ENCODE measurements at regions of chr7 and their contacts with region 1.

Region 1: GRCh38 chr7:99525713-99526440 is 21.4 kb downstream of the ZKSCAN5 start:
- DNase-seq: peak; percentile 37
- ATAC-seq: peak; percentile 58
- H3K4me3 Mint-ChIP-seq: no peak overlapping the region
- H3K27ac Mint-ChIP-seq: peak overlapping the region; percentile 75; the same call in 1 of the 2 replicates
- H3K4me1 Mint-ChIP-seq: no peaks in the 10 kb centered on the region
- H3K27me3 Mint-ChIP-seq: peaks cover 6% of the 10 kb centered on the region
- CTCF ChIP-seq: no peak

Region 2: GRCh38 chr7:99478464-99479440 is 47.1 kb before region 1 on chr7:
- CTCF ChIA-PET with region 1: no interaction called
- POLR2A ChIA-PET with region 1: no interaction called
- DNase-seq: no peak
- ATAC-seq: no peak
- H3K4me3 Mint-ChIP-seq: no peak overlapping the region
- H3K27ac Mint-ChIP-seq: no peak overlapping the region
- H3K4me1 Mint-ChIP-seq: peaks cover 2% of the 10 kb centered on the region; the same call in 1 of the 2 replicates
- H3K27me3 Mint-ChIP-seq: no peaks in the 10 kb centered on the region
- CTCF ChIP-seq: no peak

Region 3: GRCh38 chr7:99504603-99505323 is 21.1 kb before region 1 on chr7 and contains the start of gene ZKSCAN5:
- CTCF ChIA-PET with region 1: interaction called, 11 read pairs
- POLR2A ChIA-PET with region 1: interaction called, 4 read pairs
- DNase-seq: peak; percentile 97
- ATAC-seq: peak; percentile 76
- H3K4me3 Mint-ChIP-seq: peak within 1 kb of the TSS; percentile 91
- H3K27ac Mint-ChIP-seq: peak within 1 kb of the TSS; percentile 97
- H3K4me1 Mint-ChIP-seq: peaks cover 19% of the 10 kb centered on the region
- H3K27me3 Mint-ChIP-seq: no peaks in the 10 kb centered on the region
- CTCF ChIP-seq: no peak
- total RNA-seq, gene ZKSCAN5: 14.5 to 15.7 TPM (median 15.5 TPM) in 3 replicates

Region 4: DNA sequence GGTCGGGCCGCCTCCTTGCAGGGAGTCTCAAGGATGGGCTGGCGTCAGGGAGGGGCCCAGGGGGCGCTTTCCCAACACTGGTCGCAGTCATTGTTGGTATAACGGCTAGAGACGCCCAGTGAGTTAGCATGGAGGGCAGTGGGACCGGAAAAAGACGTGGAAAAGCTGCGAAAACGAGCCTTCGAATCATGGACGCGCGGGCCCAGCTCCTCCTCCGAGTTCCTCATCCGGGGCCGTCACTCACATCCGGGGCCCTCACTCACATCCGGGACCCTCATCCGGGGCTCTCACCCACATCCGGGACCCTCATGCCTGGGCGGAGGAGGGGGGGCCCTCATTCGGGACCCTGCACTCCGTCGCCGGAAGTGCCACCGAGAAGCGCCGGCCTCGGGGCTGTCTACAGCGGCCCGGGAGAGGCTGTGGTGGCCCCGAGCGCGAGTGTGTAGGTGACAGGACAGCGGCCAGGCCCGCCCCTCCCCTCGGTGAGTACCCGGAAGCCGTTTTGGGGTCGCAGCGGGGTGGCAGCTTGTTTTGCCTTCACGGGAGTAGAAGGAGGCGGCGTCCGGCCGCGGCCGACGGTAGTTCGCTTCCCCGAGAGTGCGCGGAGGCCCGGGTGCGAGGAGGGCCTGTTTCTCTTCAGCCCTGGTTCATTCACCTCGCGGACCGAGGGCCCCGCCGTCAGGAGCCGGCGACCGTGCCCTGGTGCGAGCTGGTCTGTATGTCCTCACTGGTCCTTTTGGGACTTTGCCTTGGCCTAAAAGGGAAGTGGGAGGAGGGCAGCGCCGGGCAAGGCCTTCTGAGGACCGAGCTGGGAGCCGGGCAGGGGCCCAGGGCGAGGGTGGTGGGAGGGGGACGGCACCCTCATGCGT is 32.7 kb after region 1 on chr7 and contains the start of gene ZNF655:
- CTCF ChIA-PET with region 1: interaction called, 16 read pairs
- POLR2A ChIA-PET with region 1: interaction called, 3 read pairs
- DNase-seq: peak; percentile 94
- ATAC-seq: peak; percentile 97
- H3K4me3 Mint-ChIP-seq: peak within 1 kb of the TSS; percentile 98
- H3K27ac Mint-ChIP-seq: peak within 1 kb of the TSS; percentile 94
- H3K4me1 Mint-ChIP-seq: peaks cover 11% of the 10 kb centered on the region
- H3K27me3 Mint-ChIP-seq: no peaks in the 10 kb centered on the region
- CTCF ChIP-seq: no peak
- total RNA-seq, gene ZNF655: 37.1 to 40.4 TPM (median 38.2 TPM) in 3 replicates

Region 5: DNA sequence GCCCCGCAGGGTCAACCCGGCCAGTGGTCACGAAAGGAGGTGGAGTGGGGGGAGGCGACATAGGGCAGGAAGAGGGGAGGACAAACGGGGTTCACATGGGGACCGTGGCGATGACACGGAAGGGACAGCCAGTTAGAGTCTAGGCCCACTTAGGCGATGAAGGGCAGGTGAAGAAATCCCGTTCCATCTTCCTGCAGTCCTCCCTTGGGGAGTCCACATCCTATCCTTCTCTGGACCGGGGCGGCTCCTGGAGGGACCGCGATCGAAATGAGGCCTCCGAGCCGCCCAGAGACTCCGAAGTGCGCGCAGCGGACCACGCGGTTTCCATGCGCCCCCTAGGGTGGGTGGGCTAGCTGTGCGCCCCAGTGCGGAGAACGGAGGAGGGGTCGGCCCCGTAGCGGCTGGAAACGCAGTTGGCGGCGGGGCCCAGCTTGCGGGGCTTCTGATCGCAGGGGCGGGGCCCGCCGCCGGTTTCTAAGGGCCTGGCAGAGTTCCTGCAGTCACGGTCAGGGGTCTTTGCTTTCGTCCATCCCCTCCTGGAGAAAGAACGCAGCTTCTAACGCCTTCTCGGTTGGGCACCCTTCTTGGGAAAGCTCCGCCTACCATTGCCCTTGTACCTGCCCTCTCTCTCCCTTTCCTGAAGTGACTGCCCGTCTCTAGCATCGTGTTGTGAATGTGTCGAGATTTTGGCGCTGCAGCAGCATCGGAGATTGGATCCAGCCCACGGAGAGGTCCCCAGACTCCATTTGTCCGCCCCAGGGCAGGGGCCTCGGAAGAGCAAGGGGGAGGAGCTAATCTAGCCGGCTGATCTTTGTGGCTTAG is 54.3 kb after region 1 on chr7:
- CTCF ChIA-PET with region 1: interaction called, 16 read pairs
- POLR2A ChIA-PET with region 1: no interaction called
- DNase-seq: peak; percentile 81
- ATAC-seq: peak; percentile 81
- H3K4me3 Mint-ChIP-seq: peak overlapping the region; percentile 92
- H3K27ac Mint-ChIP-seq: peak overlapping the region; percentile 93
- H3K4me1 Mint-ChIP-seq: peaks cover 24% of the 10 kb centered on the region
- H3K27me3 Mint-ChIP-seq: no peaks in the 10 kb centered on the region; the same call in 1 of the 2 replicates
- CTCF ChIP-seq: peak; percentile 58; the same call in 1 of the 2 replicates

Region 6: DNA sequence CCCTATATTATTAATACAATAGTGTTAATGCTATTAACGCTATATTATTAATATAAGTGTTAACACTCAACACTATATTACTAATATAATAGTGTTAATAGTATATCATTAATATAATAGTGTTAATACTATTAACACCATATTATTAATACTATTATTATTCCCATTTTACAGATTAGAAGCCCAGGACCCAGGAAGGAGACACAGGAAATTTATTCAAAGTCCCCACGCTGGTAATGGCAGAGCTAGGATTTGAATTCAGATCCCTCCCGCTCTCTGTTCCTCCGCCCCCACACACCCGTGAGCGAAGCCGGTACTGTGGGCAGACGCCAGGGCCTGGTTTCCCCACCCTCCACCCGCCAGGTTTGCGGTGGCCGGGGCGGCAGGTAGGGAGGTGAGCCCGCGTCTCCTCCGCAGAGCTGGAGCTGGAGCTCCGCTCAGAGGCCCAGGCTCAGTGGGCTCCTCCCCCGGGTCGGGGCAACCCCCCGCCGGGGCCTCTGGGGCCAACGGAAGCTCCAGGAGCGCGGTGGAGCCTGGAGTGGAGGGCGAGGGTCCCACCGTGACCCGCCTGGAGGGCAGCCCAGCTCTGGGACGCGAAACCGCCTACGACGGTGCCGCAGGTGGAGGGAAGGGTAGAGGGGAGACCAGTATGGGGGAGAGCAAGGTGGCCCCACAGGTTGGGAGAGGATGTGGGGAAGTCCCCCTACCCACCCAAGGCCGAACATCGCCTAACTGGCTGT is 72.1 kb after region 1 on chr7 and contains the start of gene TMEM225B:
- CTCF ChIA-PET with region 1: interaction called, 16 read pairs
- POLR2A ChIA-PET with region 1: no interaction called
- DNase-seq: peak; percentile 24
- ATAC-seq: peak; percentile 14
- H3K4me3 Mint-ChIP-seq: no peak within 1 kb of the TSS
- H3K27ac Mint-ChIP-seq: no peak within 1 kb of the TSS
- H3K4me1 Mint-ChIP-seq: no peaks in the 10 kb centered on the region
- H3K27me3 Mint-ChIP-seq: no peaks in the 10 kb centered on the region; the same call in 1 of the 2 replicates
- CTCF ChIP-seq: no peak
- total RNA-seq, gene TMEM225B: 0.78 to 0.81 TPM (median 0.78 TPM) in 3 replicates

Region 7: DNA sequence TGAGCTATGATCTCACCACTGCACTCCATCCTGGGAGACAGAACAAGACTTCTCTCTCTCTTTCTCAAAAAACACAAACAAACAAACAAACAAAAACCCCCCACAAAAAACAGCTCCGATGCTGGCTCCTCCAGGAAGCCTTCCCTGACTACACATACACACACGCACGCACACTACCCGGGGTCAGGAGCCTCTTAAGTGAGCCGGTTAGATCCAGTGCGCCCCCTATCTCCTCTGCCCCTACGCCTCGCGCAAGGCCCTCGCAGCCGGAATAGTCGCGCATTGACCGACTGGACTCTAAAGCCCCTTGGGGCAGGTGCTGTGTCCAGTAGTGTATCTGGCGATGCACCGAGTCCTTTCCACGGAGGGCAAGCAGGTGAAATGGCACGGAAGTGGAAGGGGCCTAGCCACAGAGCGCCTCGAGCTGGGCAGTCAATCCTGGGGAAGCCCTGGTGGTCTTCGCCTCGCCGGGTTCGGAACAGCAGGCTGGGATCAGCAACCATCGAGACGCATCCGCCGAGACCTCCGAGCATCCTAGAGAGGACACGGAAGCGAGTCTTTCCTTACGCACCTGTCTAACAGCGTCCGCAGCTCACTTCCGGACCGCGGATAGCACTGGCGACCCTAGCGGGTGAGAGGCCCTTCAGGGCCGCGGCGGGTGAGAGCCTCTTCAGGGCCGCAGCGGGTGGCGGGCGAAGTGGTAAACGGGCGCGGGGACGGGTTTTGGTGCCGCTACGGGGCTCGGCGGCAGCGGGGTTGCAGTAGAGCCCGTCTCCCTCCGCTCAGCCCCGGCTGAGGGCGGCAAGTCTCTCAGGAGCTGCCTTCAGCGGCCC is 90.7 kb after region 1 on chr7 and contains the start of gene ZSCAN25:
- CTCF ChIA-PET with region 1: interaction called, 33 read pairs
- POLR2A ChIA-PET with region 1: no interaction called
- DNase-seq: peak; percentile 94
- ATAC-seq: peak; percentile 97
- H3K4me3 Mint-ChIP-seq: peak within 1 kb of the TSS; percentile 95
- H3K27ac Mint-ChIP-seq: peak within 1 kb of the TSS; percentile 93
- H3K4me1 Mint-ChIP-seq: peaks cover 11% of the 10 kb centered on the region
- H3K27me3 Mint-ChIP-seq: peaks cover 8% of the 10 kb centered on the region
- CTCF ChIP-seq: no peak
- total RNA-seq, gene ZSCAN25: 16.3 to 20.1 TPM (median 19.9 TPM) in 3 replicates